ENCODE measurements at regions of chr12 and their contacts with region 1.

Region 1: DNA sequence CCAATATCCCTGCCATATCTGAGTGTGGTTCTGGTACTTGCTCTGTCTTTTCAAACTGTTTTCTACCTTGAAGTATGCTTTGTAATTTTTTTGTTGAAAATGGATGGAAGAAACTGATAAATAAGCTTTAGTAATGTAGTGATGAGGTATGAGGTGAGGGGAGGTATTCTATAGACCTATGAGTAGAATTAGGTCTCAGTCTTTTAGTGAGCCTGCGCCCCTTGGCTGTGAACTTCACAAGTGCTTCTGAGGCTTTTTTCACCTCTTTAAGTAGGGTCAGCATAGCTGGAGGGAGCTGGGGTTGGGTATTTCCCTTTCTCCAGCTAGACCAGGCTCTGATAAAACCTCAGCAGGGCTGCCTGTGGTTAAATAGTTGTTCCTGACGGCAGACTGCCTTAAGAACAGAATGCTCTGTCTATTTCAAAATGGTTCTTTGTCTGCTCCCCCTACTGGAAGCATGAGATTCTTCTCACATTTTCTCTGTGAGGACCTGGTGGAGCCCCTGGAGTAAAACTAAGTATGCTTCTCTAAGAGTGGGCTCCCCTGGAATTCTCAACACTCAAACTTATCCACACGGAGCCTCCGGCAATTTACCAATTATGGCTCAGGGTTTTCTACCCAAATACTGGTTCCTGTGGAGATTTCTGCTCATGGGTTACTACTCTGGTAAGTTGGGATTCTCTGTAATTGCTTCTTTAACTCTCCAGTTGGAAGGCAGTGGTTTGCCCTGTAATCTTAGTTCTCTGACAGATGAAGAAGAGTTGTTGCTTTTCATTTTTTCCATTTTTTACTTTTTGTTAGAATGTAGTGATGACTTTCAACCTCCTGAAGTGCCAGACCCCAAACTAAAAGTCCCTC is 13.1 kb downstream of the KRT5 start:
- DNase-seq: peak; percentile 61 to 75
- ATAC-seq: peak; percentile 92 to 98; a peak in 5 of 6 replicates
- H3K4me3 ChIP-seq: no peak overlapping the region
- H3K27ac ChIP-seq: no peak overlapping the region
- H3K4me1 ChIP-seq: no peaks in the 10 kb centered on the region
- CTCF ChIP-seq: peak; percentile 65
- EP300 ChIP-seq: no peak
- POLR2A ChIP-seq: no peak
- RAD21 ChIP-seq: peak; percentile 56 to 65

Region 2: GRCh38 chr12:52404956-52405355 is 102.1 kb before region 1 on chr12:
- CTCF ChIA-PET with region 1: interaction called, 15 read pairs
- POLR2A ChIA-PET with region 1: no interaction called
- DNase-seq: peak in 1 of 2 experiments; percentile 37
- ATAC-seq: peak; percentile 33 to 66; a peak in 3 of 6 replicates
- H3K4me3 ChIP-seq: no peak overlapping the region
- H3K27ac ChIP-seq: no peak overlapping the region
- H3K4me1 ChIP-seq: no peaks in the 10 kb centered on the region
- CTCF ChIP-seq: no peak
- EP300 ChIP-seq: no peak
- POLR2A ChIP-seq: no peak
- RAD21 ChIP-seq: peak in 1 of 2 experiments; percentile 29; a peak in 1 of 5 replicates

Region 3: DNA sequence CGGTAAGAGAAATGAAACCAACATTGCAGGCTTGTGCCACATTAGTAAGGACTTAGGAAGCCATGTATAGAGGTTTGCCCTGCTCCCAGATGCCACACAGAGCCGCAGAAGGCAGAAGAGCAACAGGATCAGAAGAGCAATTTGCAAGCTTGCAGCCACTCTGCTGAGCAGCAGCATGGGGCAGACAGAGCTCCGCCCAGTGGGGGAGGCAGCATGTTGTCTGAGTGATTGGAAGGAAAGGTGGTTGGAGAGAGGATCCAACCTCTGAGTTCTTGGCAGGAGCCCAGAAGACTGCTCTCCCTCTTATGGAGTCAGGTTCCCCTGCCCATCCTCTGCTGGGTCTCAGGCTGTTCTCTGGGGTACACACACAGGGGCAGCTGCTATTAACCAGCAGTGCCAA is 11.7 kb before region 1 on chr12:
- CTCF ChIA-PET with region 1: interaction called, 13 read pairs
- POLR2A ChIA-PET with region 1: no interaction called
- DNase-seq: peak; percentile 41 to 42
- ATAC-seq: peak; percentile 43 to 74; a peak in 3 of 6 replicates
- H3K4me3 ChIP-seq: no peak overlapping the region
- H3K27ac ChIP-seq: peak overlapping the region; percentile 62 to 80; a peak in 4 of 6 replicates
- H3K4me1 ChIP-seq: peaks cover 40% of the 10 kb centered on the region
- CTCF ChIP-seq: no peak
- EP300 ChIP-seq: no peak
- POLR2A ChIP-seq: no peak
- RAD21 ChIP-seq: no peak

Region 4: GRCh38 chr12:52534487-52534886 is 27.4 kb after region 1 on chr12:
- CTCF ChIA-PET with region 1: interaction called, 10 read pairs
- POLR2A ChIA-PET with region 1: no interaction called
- DNase-seq: peak in 1 of 2 experiments; percentile 39
- ATAC-seq: peak in 1 of 2 experiments; percentile 46; a peak in 2 of 6 replicates
- H3K4me3 ChIP-seq: no peak overlapping the region
- H3K27ac ChIP-seq: no peak overlapping the region
- H3K4me1 ChIP-seq: peaks cover 14% of the 10 kb centered on the region
- CTCF ChIP-seq: peak; percentile 38; the same call in 2 of the 3 replicates
- EP300 ChIP-seq: no peak
- POLR2A ChIP-seq: no peak
- RAD21 ChIP-seq: peak in 1 of 2 experiments; percentile 55; a peak in 3 of 5 replicates

Region 5: GRCh38 chr12:52551216-52551865 is 44.3 kb after region 1 on chr12:
- CTCF ChIA-PET with region 1: no interaction called
- POLR2A ChIA-PET with region 1: no interaction called
- DNase-seq: no peak
- ATAC-seq: no peak
- H3K4me3 ChIP-seq: no peak overlapping the region
- H3K27ac ChIP-seq: no peak overlapping the region
- H3K4me1 ChIP-seq: 0 out of 3 replicates have a peak, but pooled peaks cover 5% of the 10 kb centered on the region
- CTCF ChIP-seq: no peak
- EP300 ChIP-seq: no peak
- POLR2A ChIP-seq: no peak
- RAD21 ChIP-seq: no peak